ENCODE measurements at regions of chr3 and their contacts with region 1.

Region 1: DNA sequence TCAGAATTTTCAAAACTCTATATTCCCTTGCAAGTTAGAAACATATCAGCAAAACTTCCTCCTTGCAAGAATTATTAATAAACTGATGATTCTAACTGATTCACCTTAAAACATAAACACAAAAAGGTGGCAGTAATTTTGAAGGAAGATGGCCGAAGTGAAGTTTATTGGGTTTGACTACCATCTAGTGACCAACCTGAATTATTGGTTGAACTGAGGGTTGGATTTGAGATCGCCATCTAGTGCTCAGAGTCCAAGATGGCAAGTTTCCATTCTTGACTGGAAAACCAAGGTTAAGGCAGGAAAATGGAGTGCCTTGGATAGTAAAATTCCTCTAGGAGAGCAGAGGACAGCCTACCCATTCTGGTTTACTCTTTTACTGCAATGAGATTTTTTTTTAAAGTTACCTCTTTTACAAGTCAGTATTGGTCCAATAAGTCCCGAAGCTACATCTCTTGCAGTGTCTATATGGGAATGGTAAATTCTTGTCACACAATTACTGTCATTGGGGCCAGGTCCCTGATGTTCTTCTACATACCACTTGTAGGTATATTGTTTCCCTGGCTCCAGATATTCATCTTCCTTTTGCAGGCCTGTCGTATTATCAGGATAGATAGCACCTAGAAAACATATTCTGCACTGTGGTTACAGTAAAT is 51.6 kb upstream of the CP start:
- DNase-seq: peak; percentile 82
- ATAC-seq: peak; percentile 93
- H3K4me3 ChIP-seq: no peak overlapping the region
- H3K4me3 Mint-ChIP-seq: no peak overlapping the region
- H3K27ac ChIP-seq: no peak overlapping the region
- H3K27ac Mint-ChIP-seq: no peak overlapping the region
- H3K4me1 ChIP-seq: peaks cover 9 to 12% of the 10 kb centered on the region in 2 donors
- H3K4me1 Mint-ChIP-seq: peaks cover 17% of the 10 kb centered on the region
- H3K27me3 ChIP-seq: no peaks in the 10 kb centered on the region
- H3K27me3 Mint-ChIP-seq: no peaks in the 10 kb centered on the region
- CTCF ChIP-seq: peak; percentile 99

Region 2: DNA sequence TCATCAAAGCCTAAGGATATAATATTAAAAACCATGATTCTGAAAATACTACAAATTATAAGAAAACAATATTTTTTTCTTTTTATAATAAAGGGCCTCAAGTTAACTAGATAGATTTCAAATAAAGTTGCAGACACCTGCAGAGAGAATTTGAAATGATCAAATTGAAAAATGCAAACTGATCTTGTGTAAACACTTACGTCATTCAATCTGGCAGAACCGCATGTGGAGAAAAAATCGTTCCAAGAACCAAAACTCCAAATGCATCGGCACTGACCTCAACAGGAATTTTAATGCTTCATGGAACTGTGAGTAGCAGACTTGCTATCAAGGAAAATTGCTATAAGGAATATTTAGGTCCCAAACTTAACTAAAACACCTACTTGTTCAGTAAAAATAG is 390.9 kb before region 1 on chr3:
- CTCF ChIA-PET with region 1: no interaction called
- POLR2A ChIA-PET with region 1: no interaction called
- intact Hi-C with region 1: no loop called
- DNase-seq: no peak
- ATAC-seq: no peak
- H3K4me3 ChIP-seq: no peak overlapping the region
- H3K4me3 Mint-ChIP-seq: no peak overlapping the region
- H3K27ac ChIP-seq: no peak overlapping the region
- H3K27ac Mint-ChIP-seq: no peak overlapping the region
- H3K4me1 ChIP-seq: no peaks in the 10 kb centered on the region
- H3K4me1 Mint-ChIP-seq: no peaks in the 10 kb centered on the region
- H3K27me3 ChIP-seq: peaks cover 0 to 2% (median 0%) of the 10 kb centered on the region in 4 experiments
- H3K27me3 Mint-ChIP-seq: peaks cover 11% of the 10 kb centered on the region
- CTCF ChIP-seq: no peak

Region 3: DNA sequence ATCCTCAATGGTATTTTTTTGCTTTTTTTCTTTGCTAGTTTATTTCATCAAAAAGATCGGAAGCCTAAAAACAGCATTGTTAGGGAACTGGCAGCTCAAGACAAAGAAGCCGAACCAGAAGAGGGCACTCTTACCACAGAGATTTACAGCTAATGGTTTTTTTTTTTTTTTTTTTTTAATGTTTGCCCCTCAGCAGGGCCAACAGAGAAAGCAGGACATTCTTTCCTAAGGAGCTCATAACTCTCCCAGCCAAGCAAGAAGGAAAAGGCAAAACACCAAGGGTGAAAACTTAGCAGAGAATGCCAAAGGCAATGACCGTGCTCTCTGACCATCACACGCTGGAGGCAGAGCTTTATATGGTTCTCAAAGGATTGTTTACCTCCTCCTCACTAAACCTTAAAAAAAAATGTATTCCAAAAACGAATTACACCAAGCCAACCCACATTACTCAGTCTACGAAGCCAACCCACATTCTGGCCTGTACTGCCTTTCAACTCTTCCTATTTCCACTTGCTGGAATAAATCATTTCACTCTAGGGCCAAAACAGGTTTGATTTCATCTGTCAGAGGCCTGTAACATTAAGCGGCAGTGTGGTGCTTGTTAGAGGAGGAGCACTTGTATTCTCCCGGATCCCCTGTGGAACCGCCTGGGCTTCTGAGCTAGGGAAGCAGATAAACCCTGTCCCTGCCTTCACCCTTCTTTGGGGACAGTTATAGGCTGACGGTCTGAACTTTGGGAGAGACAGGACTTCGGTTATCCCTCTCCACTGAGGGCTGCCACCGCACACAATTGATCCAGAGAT is 317.5 kb before region 1 on chr3:
- CTCF ChIA-PET with region 1: interaction called, 22 read pairs
- POLR2A ChIA-PET with region 1: no interaction called
- intact Hi-C with region 1: loop called (anchors 1 kb)
- DNase-seq: peak; percentile 40
- ATAC-seq: no peak
- H3K4me3 ChIP-seq: no peak overlapping the region
- H3K4me3 Mint-ChIP-seq: no peak overlapping the region
- H3K27ac ChIP-seq: no peak overlapping the region
- H3K27ac Mint-ChIP-seq: no peak overlapping the region
- H3K4me1 ChIP-seq: no peaks in the 10 kb centered on the region
- H3K4me1 Mint-ChIP-seq: no peaks in the 10 kb centered on the region
- H3K27me3 ChIP-seq: no peaks in the 10 kb centered on the region
- H3K27me3 Mint-ChIP-seq: peaks cover 8% of the 10 kb centered on the region
- CTCF ChIP-seq: peak; percentile 50

Region 4: GRCh38 chr3:149120051-149120972 is 152.9 kb before region 1 on chr3:
- CTCF ChIA-PET with region 1: interaction called, 299 read pairs
- POLR2A ChIA-PET with region 1: no interaction called
- intact Hi-C with region 1: loop called (anchors 1 kb)
- DNase-seq: peak; percentile 80
- ATAC-seq: peak; percentile 96
- H3K4me3 ChIP-seq: no peak overlapping the region
- H3K4me3 Mint-ChIP-seq: no peak overlapping the region
- H3K27ac ChIP-seq: no peak overlapping the region
- H3K27ac Mint-ChIP-seq: no peak overlapping the region
- H3K4me1 ChIP-seq: peaks cover 0 to 5% of the 10 kb centered on the region in 2 donors
- H3K4me1 Mint-ChIP-seq: peaks cover 4% of the 10 kb centered on the region
- H3K27me3 ChIP-seq: no peaks in the 10 kb centered on the region
- H3K27me3 Mint-ChIP-seq: no peaks in the 10 kb centered on the region
- CTCF ChIP-seq: peak; percentile 83

Region 5: GRCh38 chr3:149145974-149146373 is 127.2 kb before region 1 on chr3:
- CTCF ChIA-PET with region 1: interaction called, 10 read pairs
- POLR2A ChIA-PET with region 1: interaction called, 4 read pairs
- intact Hi-C with region 1: loop called (anchors 1 kb)
- DNase-seq: peak; percentile 88
- ATAC-seq: peak; percentile 93
- H3K4me3 ChIP-seq: peak overlapping the region in 4 of 5 experiments; percentile 6 to 42 (median 34)
- H3K4me3 Mint-ChIP-seq: no peak overlapping the region
- H3K27ac ChIP-seq: peak overlapping the region; percentile 84
- H3K27ac Mint-ChIP-seq: no peak overlapping the region
- H3K4me1 ChIP-seq: peaks cover 54 to 65% of the 10 kb centered on the region in 2 donors
- H3K4me1 Mint-ChIP-seq: peaks cover 45% of the 10 kb centered on the region
- H3K27me3 ChIP-seq: no peaks in the 10 kb centered on the region
- H3K27me3 Mint-ChIP-seq: no peaks in the 10 kb centered on the region
- CTCF ChIP-seq: no peak

Region 6: GRCh38 chr3:149245738-149246451 is 27.3 kb before region 1 on chr3:
- CTCF ChIA-PET with region 1: interaction called, 10 read pairs
- POLR2A ChIA-PET with region 1: no interaction called
- intact Hi-C with region 1: no loop called
- DNase-seq: peak; percentile 69
- ATAC-seq: peak; percentile 67
- H3K4me3 ChIP-seq: peak overlapping the region in 3 of 5 experiments; percentile 26
- H3K4me3 Mint-ChIP-seq: peak overlapping the region; percentile 57
- H3K27ac ChIP-seq: peak overlapping the region; percentile 46 to 87
- H3K27ac Mint-ChIP-seq: peak overlapping the region; percentile 57
- H3K4me1 ChIP-seq: peaks cover 55 to 56% of the 10 kb centered on the region in 2 donors
- H3K4me1 Mint-ChIP-seq: peaks cover 61% of the 10 kb centered on the region
- H3K27me3 ChIP-seq: no peaks in the 10 kb centered on the region
- H3K27me3 Mint-ChIP-seq: no peaks in the 10 kb centered on the region
- CTCF ChIP-seq: no peak

Region 7: DNA sequence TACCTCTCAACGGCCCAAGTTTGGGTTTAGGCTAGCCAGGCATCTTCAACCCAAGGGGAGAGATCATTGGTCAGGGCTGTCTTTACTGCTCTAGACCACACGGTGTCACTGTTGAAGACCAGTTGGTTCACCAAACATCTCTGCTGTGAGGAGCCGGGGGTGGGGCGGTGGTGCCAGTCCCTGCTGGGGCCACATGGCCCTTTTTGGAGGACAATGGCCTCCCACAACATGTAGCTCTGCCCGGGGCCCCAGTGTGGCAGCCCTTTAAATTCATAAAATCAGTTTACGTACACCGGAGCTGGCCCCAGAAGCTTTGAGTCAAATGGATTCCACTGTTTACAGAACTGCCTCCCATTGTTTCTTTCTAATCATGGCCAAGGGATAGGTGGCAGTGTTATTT is 79.3 kb after region 1 on chr3:
- CTCF ChIA-PET with region 1: no interaction called
- POLR2A ChIA-PET with region 1: no interaction called
- intact Hi-C with region 1: no loop called
- DNase-seq: peak; percentile 21
- ATAC-seq: peak; percentile 39
- H3K4me3 ChIP-seq: no peak overlapping the region
- H3K4me3 Mint-ChIP-seq: no peak overlapping the region
- H3K27ac ChIP-seq: no peak overlapping the region
- H3K27ac Mint-ChIP-seq: no peak overlapping the region
- H3K4me1 ChIP-seq: no peaks in the 10 kb centered on the region
- H3K4me1 Mint-ChIP-seq: no peaks in the 10 kb centered on the region
- H3K27me3 ChIP-seq: peaks cover 0 to 3% (median under 1%) of the 10 kb centered on the region in 4 experiments
- H3K27me3 Mint-ChIP-seq: peaks cover 21% of the 10 kb centered on the region
- CTCF ChIP-seq: peak; percentile 57

Region 8: DNA sequence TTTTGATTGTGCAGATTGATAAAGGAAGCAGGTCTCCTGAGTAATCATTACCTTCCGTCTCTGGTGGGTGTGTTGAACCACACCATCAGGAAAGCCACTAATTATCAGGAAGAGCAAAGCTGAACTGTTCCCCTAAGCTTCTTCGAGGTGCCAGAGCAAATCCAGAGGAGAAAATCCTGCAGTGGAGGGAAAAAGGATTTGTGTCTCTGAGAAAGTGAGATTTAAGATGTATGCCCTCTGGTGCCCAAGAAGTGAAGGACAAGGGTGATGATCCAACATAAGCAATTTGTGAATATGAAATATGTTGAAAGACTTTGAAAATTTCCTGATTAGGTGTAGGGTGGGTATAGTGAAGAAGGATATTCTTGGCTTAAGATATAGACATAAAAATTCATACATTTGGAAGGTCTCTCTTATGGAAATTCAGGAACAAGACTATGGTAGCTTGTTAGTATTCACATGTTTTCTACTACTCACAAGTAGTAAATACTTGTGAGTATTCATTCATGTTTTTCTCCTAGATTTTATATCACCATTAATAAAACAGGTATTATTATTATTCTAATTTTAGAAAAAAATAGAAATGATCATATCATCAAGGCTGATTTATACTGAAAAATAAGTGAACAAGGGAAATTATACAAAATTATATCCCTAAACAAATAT is 444.3 kb after region 1 on chr3:
- CTCF ChIA-PET with region 1: no interaction called
- POLR2A ChIA-PET with region 1: no interaction called
- intact Hi-C with region 1: loop called (anchors 1 kb)
- DNase-seq: peak; percentile 36
- ATAC-seq: no peak
- H3K4me3 ChIP-seq: peak overlapping the region in 2 of 5 experiments; percentile 31 to 37
- H3K4me3 Mint-ChIP-seq: peak overlapping the region; percentile 47
- H3K27ac ChIP-seq: no peak overlapping the region
- H3K27ac Mint-ChIP-seq: no peak overlapping the region
- H3K4me1 ChIP-seq: no peaks in the 10 kb centered on the region
- H3K4me1 Mint-ChIP-seq: no peaks in the 10 kb centered on the region
- H3K27me3 ChIP-seq: no peaks in the 10 kb centered on the region
- H3K27me3 Mint-ChIP-seq: peaks cover under 1% of the 10 kb centered on the region
- CTCF ChIP-seq: peak; percentile 75

Measured in B cell (primary cell).